Activated naive CD4-positive, alpha-beta T cell treated with anti-CD3 and anti-CD28 coated beads, Interleukin-2, amount 10 ng/mL, durations not matched to agents 7 days and 5 days (primary cell): ENCODE measurements at regions of chr1 and their contacts with region 1.

Region 1: DNA sequence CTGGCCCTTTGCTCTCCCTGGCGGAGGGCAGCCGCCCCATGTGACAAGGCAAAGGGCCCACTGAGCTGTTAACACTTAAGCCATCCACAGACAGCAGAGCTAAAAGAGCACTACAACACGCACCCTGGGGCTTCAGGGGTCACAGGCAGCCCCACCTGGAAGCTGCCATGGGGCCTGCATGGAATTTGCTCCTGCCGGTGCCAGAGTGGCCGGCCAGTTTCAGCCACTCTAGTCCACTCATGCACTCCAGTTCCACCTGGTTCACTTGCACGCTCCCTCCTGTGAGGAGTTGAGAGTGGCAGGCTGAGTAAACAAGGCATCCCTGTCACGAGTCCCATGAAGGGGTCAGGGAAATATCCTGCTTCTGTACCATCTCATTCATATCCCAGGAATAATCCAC is 55.3 kb downstream of the RIMS3 start:
- DNase-seq: no peak
- H3K4me3 Mint-ChIP-seq: no peak overlapping the region
- H3K27ac Mint-ChIP-seq: no peak overlapping the region
- H3K4me1 Mint-ChIP-seq: no peaks in the 10 kb centered on the region
- H3K27me3 Mint-ChIP-seq: peaks cover 11% of the 10 kb centered on the region

Region 2: GRCh38 chr1:40592107-40592803 is 17.9 kb before region 1 on chr1:
- CTCF ChIA-PET with region 1: no interaction called
- DNase-seq: peak; percentile 33
- H3K4me3 Mint-ChIP-seq: no peak overlapping the region
- H3K27ac Mint-ChIP-seq: no peak overlapping the region
- H3K4me1 Mint-ChIP-seq: peaks cover 11% of the 10 kb centered on the region
- H3K27me3 Mint-ChIP-seq: peaks cover 21% of the 10 kb centered on the region

Region 3: DNA sequence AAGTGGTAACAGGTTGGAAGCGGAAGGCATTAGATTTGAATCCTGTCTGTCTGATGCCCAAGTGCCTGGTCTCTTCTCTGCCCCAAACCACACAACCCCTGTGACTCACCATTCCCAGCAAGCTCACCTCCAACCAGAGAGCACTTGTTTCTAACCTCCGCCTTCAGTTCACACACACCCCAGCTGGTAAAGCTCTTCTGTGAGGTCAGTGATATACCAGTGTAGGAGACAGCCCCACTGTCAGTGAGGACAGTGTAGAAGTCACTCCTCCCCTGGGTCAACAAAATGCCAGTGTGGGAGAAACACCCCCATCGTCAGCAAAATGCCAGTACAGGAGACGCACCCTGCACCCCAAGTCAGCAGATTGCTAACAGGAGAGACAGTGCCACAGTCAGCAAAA is 52.7 kb after region 1 on chr1:
- CTCF ChIA-PET with region 1: no interaction called
- DNase-seq: no peak
- H3K4me3 Mint-ChIP-seq: no peak overlapping the region
- H3K27ac Mint-ChIP-seq: no peak overlapping the region
- H3K4me1 Mint-ChIP-seq: peaks cover 16% of the 10 kb centered on the region
- H3K27me3 Mint-ChIP-seq: peaks cover 21% of the 10 kb centered on the region

Region 4: GRCh38 chr1:40849801-40850592 is 239.8 kb after region 1 on chr1:
- CTCF ChIA-PET with region 1: interaction called, 13 read pairs
- DNase-seq: peak; percentile 85
- H3K4me3 Mint-ChIP-seq: peak overlapping the region; percentile 4
- H3K27ac Mint-ChIP-seq: peak overlapping the region; percentile 29
- H3K4me1 Mint-ChIP-seq: peaks cover 30% of the 10 kb centered on the region
- H3K27me3 Mint-ChIP-seq: peaks cover 17% of the 10 kb centered on the region